ENCODE measurements at regions of chr11 and their contacts with region 1.

Region 1: GRCh38 chr11:66311965-66312548 is 4.8 kb downstream of the CD248 start:
- DNase-seq: peak; percentile 94

Region 2: DNA sequence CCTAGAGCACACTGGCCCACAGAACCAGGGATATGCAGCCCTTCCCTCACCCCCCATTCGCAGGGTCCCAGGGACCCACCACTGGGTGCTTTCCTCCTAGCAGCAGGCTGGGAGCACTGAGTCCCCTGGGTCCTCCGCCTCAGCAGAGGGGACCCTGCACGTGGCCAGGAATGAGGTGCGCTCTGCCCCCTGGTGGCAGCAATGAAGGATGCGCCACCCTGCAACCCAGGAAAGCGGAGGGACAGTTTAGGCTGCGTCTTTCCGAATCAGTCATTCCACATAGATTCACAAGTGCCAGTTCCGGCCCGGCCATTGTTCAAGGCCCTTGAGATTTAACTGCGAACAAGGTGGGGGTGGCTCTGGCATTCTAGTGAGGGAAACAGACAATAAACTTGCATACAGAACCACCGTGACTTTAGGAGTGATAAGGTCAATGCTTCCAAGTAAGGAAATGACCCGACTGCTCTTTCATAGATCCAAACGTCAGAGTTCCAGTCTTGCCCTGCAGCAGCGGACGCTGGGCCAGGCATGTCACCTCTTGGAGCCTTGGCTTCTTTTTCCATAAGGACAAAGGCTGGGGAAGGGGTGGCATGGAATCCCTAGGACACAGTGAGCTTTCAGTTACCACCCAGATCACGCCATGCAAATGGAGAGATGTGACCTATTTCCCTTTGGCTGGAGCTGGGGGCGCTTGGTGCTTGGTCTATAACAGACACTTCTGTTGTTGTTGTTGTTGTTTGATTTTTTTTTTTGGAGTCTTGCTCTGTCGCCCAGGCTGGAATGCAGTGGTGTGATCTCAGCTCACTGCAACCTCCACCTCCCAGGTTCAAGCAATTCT is 16.5 kb after region 1 on chr11:
- intact Hi-C with region 1: loop called (anchors 1 kb)
- DNase-seq: peak; percentile 88

Region 3: GRCh38 chr11:66386171-66387069 is 74.4 kb after region 1 on chr11:
- intact Hi-C with region 1: loop called (anchors 2 kb)
- DNase-seq: peak; percentile 86

Measured in cardiac septum (tissue), 1 donor.